Activated CD4-positive, alpha-beta T cell treated with anti-CD3 and anti-CD28 coated beads for 36 hours (primary cell): ENCODE measurements at regions of chr21 and their contacts with region 1.

Region 1: GRCh38 chr21:42233067-42233961 is 14.4 kb downstream of the ABCG1 start:
- DNase-seq: peak; percentile 93
- ATAC-seq: peak; percentile 69
- H3K4me3 Mint-ChIP-seq: peak overlapping the region; percentile 68
- H3K27ac Mint-ChIP-seq: peak overlapping the region; percentile 97
- H3K4me1 Mint-ChIP-seq: peaks cover 95% of the 10 kb centered on the region
- H3K27me3 Mint-ChIP-seq: no peaks in the 10 kb centered on the region

Region 2: DNA sequence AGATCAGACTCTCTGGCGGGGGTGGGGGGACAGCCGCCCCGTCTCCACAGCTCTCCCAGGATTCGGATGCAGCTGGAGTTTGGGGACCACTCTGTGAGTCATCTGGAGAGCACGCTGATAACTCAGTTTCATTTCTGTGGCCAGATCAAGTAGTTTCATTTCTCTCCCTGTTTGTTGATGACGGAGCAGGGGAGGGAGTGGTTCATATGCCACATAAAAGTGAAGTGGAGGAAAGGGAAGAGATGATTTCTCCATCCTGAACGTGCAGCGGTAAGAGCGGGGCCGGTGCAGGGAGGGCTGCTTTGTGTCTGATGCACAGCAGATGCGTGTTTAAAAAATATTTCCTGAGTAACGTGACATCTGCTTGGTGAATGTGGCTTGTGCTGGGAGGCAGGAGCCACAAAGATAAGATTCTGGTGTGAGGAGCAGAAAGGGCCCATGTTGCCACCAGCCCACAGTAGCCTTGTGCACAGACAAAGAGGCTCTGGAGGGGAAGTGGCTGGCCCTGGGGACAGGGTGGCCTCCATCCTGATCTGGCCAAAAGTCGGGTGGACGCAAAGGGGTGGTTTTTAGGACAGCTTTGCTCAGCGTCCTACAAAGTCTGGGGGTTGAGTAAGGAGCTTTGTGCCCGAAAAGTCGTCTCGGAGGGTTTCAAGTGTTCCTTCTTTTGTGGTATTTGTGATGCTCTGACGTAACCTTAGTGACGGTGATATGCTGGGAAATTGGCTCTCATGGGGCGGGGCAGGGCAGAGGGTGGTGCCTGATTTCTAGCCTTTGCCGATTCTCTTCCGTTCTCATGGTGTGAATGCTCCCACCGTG is 871.3 kb before region 1 on chr21 and contains the start of gene MX2:
- CTCF ChIA-PET with region 1: no interaction called
- POLR2A ChIA-PET with region 1: no interaction called
- intact Hi-C with region 1: loop called in 1 of 2 experiments (anchors 5 kb)
- DNase-seq: peak; percentile 87
- ATAC-seq: peak; percentile 79
- H3K4me3 Mint-ChIP-seq: peak within 1 kb of the TSS; percentile 77
- H3K27ac Mint-ChIP-seq: peak within 1 kb of the TSS; percentile 97
- H3K4me1 Mint-ChIP-seq: peaks cover 56% of the 10 kb centered on the region
- H3K27me3 Mint-ChIP-seq: no peaks in the 10 kb centered on the region
- total RNA-seq, gene MX2: 30.7 to 40.4 TPM

Region 3: GRCh38 chr21:41926117-41926806 is 307.1 kb before region 1 on chr21:
- CTCF ChIA-PET with region 1: no interaction called
- POLR2A ChIA-PET with region 1: no interaction called
- intact Hi-C with region 1: loop called in 1 of 2 experiments (anchors 10 kb)
- DNase-seq: peak; percentile 35
- ATAC-seq: peak; percentile 82
- H3K4me3 Mint-ChIP-seq: peak overlapping the region; percentile 86
- H3K27ac Mint-ChIP-seq: peak overlapping the region; percentile 99
- H3K4me1 Mint-ChIP-seq: peaks cover 59% of the 10 kb centered on the region
- H3K27me3 Mint-ChIP-seq: no peaks in the 10 kb centered on the region

Region 4: DNA sequence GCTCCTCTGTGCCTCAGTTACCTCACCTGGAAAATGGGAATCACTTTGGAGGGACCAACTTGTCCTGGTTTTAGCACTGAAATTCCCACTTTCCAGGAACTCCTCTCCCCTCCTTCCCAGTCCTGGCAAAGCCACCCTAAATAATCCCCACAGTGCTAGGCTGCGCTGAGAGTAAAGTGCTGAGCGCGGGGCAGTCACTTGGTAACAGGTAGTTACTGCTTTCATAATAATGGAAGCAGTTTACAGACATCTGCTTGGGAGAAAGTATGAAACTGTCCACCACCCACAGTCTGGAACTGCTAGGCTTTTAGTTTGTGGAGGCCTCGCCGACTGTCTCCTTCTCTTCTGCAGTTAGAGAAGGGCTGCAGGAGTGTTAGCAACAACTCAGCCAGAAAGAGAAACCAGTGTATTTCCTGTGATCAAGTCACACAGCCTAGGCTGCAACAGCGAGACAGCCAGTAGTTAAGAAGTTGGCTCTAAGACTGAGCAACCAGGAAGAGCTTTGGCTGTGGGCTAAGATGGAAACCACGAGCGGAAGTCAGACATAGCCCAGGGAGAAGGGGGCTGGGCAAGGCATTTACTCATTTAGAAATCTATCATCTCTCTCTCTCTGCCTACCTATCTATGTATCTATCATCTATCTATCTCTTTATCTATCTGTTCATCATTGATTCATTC is 45.2 kb before region 1 on chr21:
- CTCF ChIA-PET with region 1: interaction called, 7 read pairs
- POLR2A ChIA-PET with region 1: interaction called, 5 read pairs
- intact Hi-C with region 1: loop called (anchors 1 kb)
- DNase-seq: peak; percentile 88
- ATAC-seq: peak; percentile 93
- H3K4me3 Mint-ChIP-seq: peak overlapping the region; percentile 57
- H3K27ac Mint-ChIP-seq: peak overlapping the region; percentile 95
- H3K4me1 Mint-ChIP-seq: peaks cover 65% of the 10 kb centered on the region
- H3K27me3 Mint-ChIP-seq: peaks cover 2% of the 10 kb centered on the region

Region 5: DNA sequence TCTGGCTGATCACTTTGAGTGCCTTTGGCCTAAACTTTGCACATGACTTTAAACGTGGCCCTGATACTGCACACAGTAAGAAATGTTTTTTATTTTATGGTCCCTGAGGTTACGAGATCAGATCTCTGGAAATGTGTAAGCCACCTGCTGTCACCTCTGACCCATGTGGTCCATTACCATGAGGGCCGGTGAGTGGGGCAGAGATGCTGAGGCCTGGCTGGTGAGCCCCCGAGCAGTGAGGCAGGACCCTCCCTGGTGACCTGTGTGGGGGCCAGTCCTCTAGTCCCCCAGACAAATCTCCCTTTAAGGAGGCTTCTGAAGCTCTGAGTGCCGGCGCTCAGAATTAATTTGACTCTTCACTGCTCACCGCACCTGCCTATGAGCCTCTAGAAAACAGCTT is 69.5 kb after region 1 on chr21:
- CTCF ChIA-PET with region 1: no interaction called
- POLR2A ChIA-PET with region 1: no interaction called
- intact Hi-C with region 1: no loop called
- DNase-seq: no peak
- ATAC-seq: no peak
- H3K4me3 Mint-ChIP-seq: no peak overlapping the region
- H3K27ac Mint-ChIP-seq: no peak overlapping the region
- H3K4me1 Mint-ChIP-seq: peaks cover 13% of the 10 kb centered on the region
- H3K27me3 Mint-ChIP-seq: peaks cover 2% of the 10 kb centered on the region

Region 6: GRCh38 chr21:42400525-42400924 is 167.2 kb after region 1 on chr21:
- CTCF ChIA-PET with region 1: no interaction called
- POLR2A ChIA-PET with region 1: no interaction called
- intact Hi-C with region 1: loop called in 1 of 2 experiments (anchors 5 kb)
- DNase-seq: no peak
- ATAC-seq: peak; percentile 34
- H3K4me3 Mint-ChIP-seq: peak overlapping the region; percentile 48
- H3K27ac Mint-ChIP-seq: peak overlapping the region; percentile 89
- H3K4me1 Mint-ChIP-seq: peaks cover 58% of the 10 kb centered on the region
- H3K27me3 Mint-ChIP-seq: no peaks in the 10 kb centered on the region

Region 7: DNA sequence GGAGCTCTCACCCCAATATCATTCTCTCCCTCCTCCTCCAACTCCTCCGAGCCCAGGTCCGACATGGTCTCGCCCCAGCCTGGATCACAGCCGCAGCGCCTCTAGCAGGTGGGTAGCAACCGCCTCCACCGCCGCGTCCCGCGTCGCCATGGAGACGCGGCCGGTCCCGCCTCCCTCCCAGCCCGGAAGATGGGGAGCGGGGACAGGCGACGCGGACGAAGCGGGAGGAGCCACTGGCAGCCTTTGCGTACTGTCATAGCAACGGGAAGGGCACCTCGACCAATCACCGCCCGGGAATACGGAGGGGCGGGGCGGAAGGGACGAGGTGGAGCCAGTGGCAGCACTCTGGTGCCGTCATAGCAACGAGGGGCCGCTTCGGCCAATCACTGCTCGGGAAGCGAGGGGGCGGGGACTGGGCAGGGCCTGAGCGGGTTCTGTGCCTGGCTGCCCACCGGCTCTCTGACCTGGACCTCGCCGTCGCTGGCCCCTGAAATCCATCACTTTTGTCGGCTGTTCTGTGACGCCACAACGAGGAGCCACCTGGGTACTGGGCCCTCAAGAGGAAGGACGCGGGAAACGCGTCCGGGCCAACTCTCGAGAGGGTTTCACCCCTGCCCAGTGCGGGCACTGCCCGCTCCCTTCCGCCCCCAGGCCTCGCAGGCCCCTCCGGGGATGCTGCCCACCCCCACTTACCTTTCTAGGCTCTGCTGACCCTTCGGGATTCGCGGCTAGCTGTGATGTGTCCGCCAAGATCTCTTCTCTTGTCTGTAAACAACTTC is 263.0 kb after region 1 on chr21 and contains the start of gene RSPH1:
- CTCF ChIA-PET with region 1: no interaction called
- POLR2A ChIA-PET with region 1: no interaction called
- intact Hi-C with region 1: loop called in 1 of 2 experiments (anchors 2 kb)
- DNase-seq: peak; percentile 100
- ATAC-seq: peak; percentile 99
- H3K4me3 Mint-ChIP-seq: peak within 1 kb of the TSS; percentile 75
- H3K27ac Mint-ChIP-seq: peak within 1 kb of the TSS; percentile 69
- H3K4me1 Mint-ChIP-seq: peaks cover 25% of the 10 kb centered on the region
- H3K27me3 Mint-ChIP-seq: peaks cover 2% of the 10 kb centered on the region
- total RNA-seq, gene RSPH1: 0.21 to 0.34 TPM